ENCODE measurements at regions of chr2 and their contacts with region 1.

Region 1: GRCh38 chr2:3558205-3559014 is at the start of gene RNASEH1:
- DNase-seq: peak; percentile 94 to 100 (median 97)
- ATAC-seq: peak; percentile 98
- H3K4me3 ChIP-seq: peak within 1 kb of the TSS; percentile 72
- H3K4me3 Mint-ChIP-seq: peak within 1 kb of the TSS; percentile 86 to 93 (median 92)
- H3K27ac ChIP-seq: peak within 1 kb of the TSS; percentile 98
- H3K27ac Mint-ChIP-seq: peak within 1 kb of the TSS; percentile 90 to 98 (median 96)
- H3K4me1 ChIP-seq: peaks cover 11 to 17% of the 10 kb centered on the region in 2 donors
- H3K4me1 Mint-ChIP-seq: peaks cover 7 to 48% (median 37%) of the 10 kb centered on the region in 7 donors
- H3K27me3 ChIP-seq: no peaks in the 10 kb centered on the region
- H3K27me3 Mint-ChIP-seq: no peaks in the 10 kb centered on the region
- total RNA-seq, gene RNASEH1: 17.6 to 31.2 (median 23.4) TPM

Region 2: DNA sequence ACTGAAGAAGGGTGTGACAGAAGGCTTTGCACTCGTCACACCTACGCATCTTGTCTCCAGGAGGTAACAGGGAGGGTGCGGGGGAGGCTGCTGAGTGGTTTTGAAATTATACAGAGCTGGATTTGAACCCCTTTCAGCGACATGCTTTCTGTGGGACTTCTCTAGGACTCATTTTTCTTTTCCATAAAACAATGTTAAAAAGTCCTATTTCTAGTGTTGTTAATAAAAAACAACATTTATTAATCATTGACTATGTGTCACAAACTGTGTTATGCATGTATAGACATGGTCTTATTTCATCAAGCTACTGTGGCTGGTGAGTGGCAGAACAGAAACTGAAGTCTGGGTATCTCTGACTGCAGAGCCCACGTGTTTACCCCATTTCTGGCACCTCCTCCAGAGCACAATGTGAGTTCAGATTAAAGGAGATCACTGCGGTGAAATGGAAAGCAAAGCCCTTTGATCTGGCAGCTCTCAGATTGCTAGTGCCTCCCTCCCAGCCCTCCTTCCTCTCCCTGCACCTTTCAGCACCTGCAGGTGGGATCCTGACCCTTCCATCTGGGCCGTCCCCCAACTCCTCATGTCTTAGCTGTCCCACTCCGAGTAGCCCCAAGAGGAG is 911.9 kb before region 1 on chr2:
- CTCF ChIA-PET with region 1: no interaction called
- POLR2A ChIA-PET with region 1: no interaction called
- intact Hi-C with region 1: loop called in 1 of 2 experiments (anchors 1 kb)
- DNase-seq: peak in 8 of 9 donors; percentile 42 to 86 (median 80)
- ATAC-seq: peak; percentile 94
- H3K4me3 ChIP-seq: peak overlapping the region; percentile 32
- H3K4me3 Mint-ChIP-seq: peak overlapping the region; percentile 60 to 88 (median 82)
- H3K27ac ChIP-seq: peak overlapping the region; percentile 73
- H3K27ac Mint-ChIP-seq: peak overlapping the region; percentile 60 to 99 (median 96)
- H3K4me1 ChIP-seq: peaks cover 0 to 16% of the 10 kb centered on the region in 2 donors
- H3K4me1 Mint-ChIP-seq: peaks cover 20 to 72% (median 49%) of the 10 kb centered on the region in 7 donors
- H3K27me3 ChIP-seq: no peaks in the 10 kb centered on the region
- H3K27me3 Mint-ChIP-seq: no peaks in the 10 kb centered on the region

Region 3: GRCh38 chr2:2985020-2985419 is 573.4 kb before region 1 on chr2:
- CTCF ChIA-PET with region 1: no interaction called
- POLR2A ChIA-PET with region 1: no interaction called
- intact Hi-C with region 1: no loop called
- DNase-seq: no peak
- ATAC-seq: no peak
- H3K4me3 ChIP-seq: no peak overlapping the region
- H3K4me3 Mint-ChIP-seq: no peak overlapping the region
- H3K27ac ChIP-seq: no peak overlapping the region
- H3K27ac Mint-ChIP-seq: no peak overlapping the region
- H3K4me1 ChIP-seq: no peaks in the 10 kb centered on the region
- H3K4me1 Mint-ChIP-seq: no peaks in the 10 kb centered on the region
- H3K27me3 ChIP-seq: no peaks in the 10 kb centered on the region
- H3K27me3 Mint-ChIP-seq: peaks cover 0 to 29% (median 16%) of the 10 kb centered on the region in 5 donors

Region 4: GRCh38 chr2:3423492-3424175 is 134.8 kb before region 1 on chr2:
- CTCF ChIA-PET with region 1: no interaction called
- POLR2A ChIA-PET with region 1: no interaction called
- intact Hi-C with region 1: no loop called
- DNase-seq: peak; percentile 46 to 82 (median 61)
- ATAC-seq: peak; percentile 85
- H3K4me3 ChIP-seq: no peak overlapping the region
- H3K4me3 Mint-ChIP-seq: no peak overlapping the region
- H3K27ac ChIP-seq: no peak overlapping the region
- H3K27ac Mint-ChIP-seq: peak overlapping the region in 6 of 9 donors; percentile 33 to 85 (median 66)
- H3K4me1 ChIP-seq: no peaks in the 10 kb centered on the region
- H3K4me1 Mint-ChIP-seq: peaks cover 0 to 13% (median 6%) of the 10 kb centered on the region in 7 donors
- H3K27me3 ChIP-seq: no peaks in the 10 kb centered on the region
- H3K27me3 Mint-ChIP-seq: no peaks in the 10 kb centered on the region

Region 5: DNA sequence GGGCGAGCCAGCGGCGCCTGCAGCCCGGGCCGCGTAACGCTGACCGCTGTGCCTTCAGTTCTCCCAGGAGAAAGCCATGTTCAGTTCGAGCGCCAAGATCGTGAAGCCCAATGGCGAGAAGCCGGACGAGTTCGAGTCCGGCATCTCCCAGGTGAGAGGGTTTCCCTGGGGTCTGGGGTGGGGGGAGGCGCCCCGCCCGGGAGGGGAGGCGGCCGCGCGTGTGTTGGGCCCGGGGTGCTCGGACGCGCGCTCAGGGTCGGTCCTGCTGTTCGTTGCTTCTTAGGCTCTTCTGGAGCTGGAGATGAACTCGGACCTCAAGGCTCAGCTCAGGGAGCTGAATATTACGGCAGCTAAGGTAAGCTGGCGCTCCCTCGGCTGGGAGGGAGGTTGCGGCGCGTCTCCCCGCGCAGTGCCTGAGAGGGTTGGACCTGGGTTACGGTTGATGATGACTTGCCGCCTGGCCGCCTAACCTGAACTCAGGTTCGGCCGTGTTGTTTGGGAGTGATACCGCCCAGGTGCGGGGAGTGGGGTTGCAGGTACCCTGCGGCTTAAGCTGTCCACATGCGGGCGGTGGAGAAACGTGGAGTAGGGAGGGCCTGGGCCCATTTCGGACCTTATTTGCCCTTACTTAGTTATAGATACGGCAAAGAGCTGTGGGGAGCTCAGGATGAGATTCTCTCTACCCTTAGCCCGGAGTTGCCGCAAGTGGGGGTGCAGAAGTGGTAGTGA is 17.3 kb after region 1 on chr2:
- CTCF ChIA-PET with region 1: no interaction called
- POLR2A ChIA-PET with region 1: interaction called, 55 read pairs
- intact Hi-C with region 1: loop called (anchors 1 kb)
- DNase-seq: peak in 7 of 9 donors; percentile 24 to 52 (median 33)
- ATAC-seq: peak; percentile 41
- H3K4me3 ChIP-seq: peak overlapping the region; percentile 76
- H3K4me3 Mint-ChIP-seq: peak overlapping the region; percentile 77 to 96 (median 90)
- H3K27ac ChIP-seq: peak overlapping the region; percentile 87
- H3K27ac Mint-ChIP-seq: peak overlapping the region; percentile 84 to 97 (median 92)
- H3K4me1 ChIP-seq: peaks cover 14 to 25% of the 10 kb centered on the region in 2 donors
- H3K4me1 Mint-ChIP-seq: peaks cover 25 to 52% (median 42%) of the 10 kb centered on the region in 7 donors
- H3K27me3 ChIP-seq: no peaks in the 10 kb centered on the region
- H3K27me3 Mint-ChIP-seq: no peaks in the 10 kb centered on the region

Region 6: GRCh38 chr2:3604991-3605961 is 46.9 kb after region 1 on chr2:
- CTCF ChIA-PET with region 1: no interaction called
- POLR2A ChIA-PET with region 1: no interaction called
- intact Hi-C with region 1: loop called in 1 of 2 experiments (anchors 1 kb)
- DNase-seq: peak in 7 of 9 donors; percentile 11 to 65 (median 48)
- ATAC-seq: no peak
- H3K4me3 ChIP-seq: no peak overlapping the region
- H3K4me3 Mint-ChIP-seq: peak overlapping the region in 7 of 10 donors; percentile 18 to 84 (median 75)
- H3K27ac ChIP-seq: no peak overlapping the region
- H3K27ac Mint-ChIP-seq: peak overlapping the region in 6 of 9 donors; percentile 8 to 94 (median 88)
- H3K4me1 ChIP-seq: peaks cover 0 to 6% of the 10 kb centered on the region in 2 donors
- H3K4me1 Mint-ChIP-seq: peaks cover 2 to 35% (median 5%) of the 10 kb centered on the region in 7 donors
- H3K27me3 ChIP-seq: no peaks in the 10 kb centered on the region
- H3K27me3 Mint-ChIP-seq: no peaks in the 10 kb centered on the region